Endothelial cell of umbilical vein (primary cell): ENCODE measurements at regions of chr7 and their contacts with region 1.

Region 1: DNA sequence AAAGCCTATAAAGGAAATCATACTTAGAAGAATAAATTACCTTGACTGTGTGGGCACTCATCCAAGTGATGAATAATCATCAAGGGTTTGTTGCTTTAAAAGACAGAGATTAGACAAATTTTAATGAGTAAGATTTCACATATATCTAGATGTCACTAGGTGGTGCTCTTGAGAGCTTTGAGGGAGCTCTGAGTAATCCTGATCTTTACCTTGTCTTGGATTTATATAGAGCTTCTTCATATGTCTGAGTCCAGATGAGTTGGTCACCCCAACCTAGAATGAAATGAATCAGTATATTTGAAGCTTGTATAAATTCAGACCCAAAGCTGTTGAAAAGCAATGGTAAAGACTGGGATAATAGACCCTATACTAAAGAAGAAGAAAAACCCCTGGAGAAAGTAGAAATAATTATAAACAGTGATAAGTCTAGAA is 3.7 kb downstream of the AGR2 start:
- DNase-seq: peak; percentile 57
- H3K4me3 ChIP-seq: no peak overlapping the region
- H3K27ac ChIP-seq: no peak overlapping the region
- H3K4me1 ChIP-seq: no peaks in the 10 kb centered on the region
- H3K27me3 ChIP-seq: peaks cover 2 to 4% of the 10 kb centered on the region in 2 experiments
- CTCF ChIP-seq: peak; percentile 28 to 29
- POLR2A ChIP-seq: no peak

Region 2: GRCh38 chr7:16657656-16658279 is 143.4 kb before region 1 on chr7:
- CTCF ChIA-PET with region 1: no interaction called
- POLR2A ChIA-PET with region 1: no interaction called
- dilution Hi-C with region 1: no loop called
- intact Hi-C with region 1: no loop called
- DNase-seq: no peak
- H3K4me3 ChIP-seq: no peak overlapping the region
- H3K27ac ChIP-seq: no peak overlapping the region
- H3K4me1 ChIP-seq: peaks cover 19% of the 10 kb centered on the region
- H3K27me3 ChIP-seq: no peaks in the 10 kb centered on the region
- CTCF ChIP-seq: no peak
- POLR2A ChIP-seq: no peak

Region 3: GRCh38 chr7:16695621-16696237 is 105.4 kb before region 1 on chr7:
- CTCF ChIA-PET with region 1: interaction called, 6 read pairs
- POLR2A ChIA-PET with region 1: no interaction called
- dilution Hi-C with region 1: no loop called
- intact Hi-C with region 1: loop called (anchors 5 kb)
- DNase-seq: peak; percentile 74
- H3K4me3 ChIP-seq: no peak overlapping the region
- H3K27ac ChIP-seq: no peak overlapping the region
- H3K4me1 ChIP-seq: peaks cover 7% of the 10 kb centered on the region
- H3K27me3 ChIP-seq: no peaks in the 10 kb centered on the region
- CTCF ChIP-seq: peak; percentile 44 to 54
- POLR2A ChIP-seq: no peak

Region 4: DNA sequence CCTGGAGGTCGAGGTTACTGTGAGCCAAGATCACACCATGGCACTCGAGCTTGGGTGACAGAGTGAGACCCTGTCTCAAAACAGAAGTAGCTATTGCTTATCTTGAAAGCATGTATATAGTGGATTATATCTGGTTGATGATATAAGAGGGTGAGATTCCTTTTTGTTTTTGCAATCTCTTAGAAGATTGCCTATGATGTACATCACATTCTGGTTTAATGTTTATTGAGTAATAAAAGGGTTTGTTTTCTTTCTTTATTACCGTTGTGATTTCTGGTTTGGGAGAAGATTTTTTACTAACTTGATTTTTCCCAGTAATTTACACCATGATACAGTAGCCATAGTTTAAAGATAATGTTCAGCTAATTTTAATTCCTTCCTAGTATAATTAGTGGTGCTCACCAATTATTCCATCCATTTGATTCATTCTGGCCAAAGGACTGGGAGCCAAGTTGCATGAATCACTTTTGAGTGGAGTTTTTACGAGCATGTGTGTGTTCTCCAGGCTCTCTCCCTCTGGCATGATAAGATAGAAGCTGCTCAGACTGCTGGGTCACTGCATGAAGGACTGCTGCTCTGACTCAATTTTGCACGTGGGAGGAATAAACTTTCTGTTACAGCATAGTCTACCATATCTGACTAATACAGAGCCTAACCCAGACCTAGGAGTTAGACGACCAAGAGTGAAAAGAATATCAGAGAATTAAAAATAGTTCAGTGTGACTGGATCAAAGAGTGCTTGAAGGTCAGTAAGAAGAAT is 61.1 kb before region 1 on chr7:
- CTCF ChIA-PET with region 1: interaction called, 11 read pairs
- POLR2A ChIA-PET with region 1: no interaction called
- dilution Hi-C with region 1: no loop called
- intact Hi-C with region 1: no loop called
- DNase-seq: peak; percentile 88
- H3K4me3 ChIP-seq: no peak overlapping the region
- H3K27ac ChIP-seq: peak overlapping the region; percentile 40
- H3K4me1 ChIP-seq: peaks cover 36% of the 10 kb centered on the region
- H3K27me3 ChIP-seq: no peaks in the 10 kb centered on the region
- CTCF ChIP-seq: no peak
- POLR2A ChIP-seq: no peak

Region 5: GRCh38 chr7:16780596-16780995 is 20.5 kb before region 1 on chr7:
- CTCF ChIA-PET with region 1: interaction called, 30 read pairs
- POLR2A ChIA-PET with region 1: no interaction called
- dilution Hi-C with region 1: no loop called
- intact Hi-C with region 1: no loop called
- DNase-seq: no peak
- H3K4me3 ChIP-seq: no peak overlapping the region
- H3K27ac ChIP-seq: no peak overlapping the region
- H3K4me1 ChIP-seq: no peaks in the 10 kb centered on the region
- H3K27me3 ChIP-seq: no peaks in the 10 kb centered on the region
- CTCF ChIP-seq: no peak
- POLR2A ChIP-seq: no peak

Region 6: DNA sequence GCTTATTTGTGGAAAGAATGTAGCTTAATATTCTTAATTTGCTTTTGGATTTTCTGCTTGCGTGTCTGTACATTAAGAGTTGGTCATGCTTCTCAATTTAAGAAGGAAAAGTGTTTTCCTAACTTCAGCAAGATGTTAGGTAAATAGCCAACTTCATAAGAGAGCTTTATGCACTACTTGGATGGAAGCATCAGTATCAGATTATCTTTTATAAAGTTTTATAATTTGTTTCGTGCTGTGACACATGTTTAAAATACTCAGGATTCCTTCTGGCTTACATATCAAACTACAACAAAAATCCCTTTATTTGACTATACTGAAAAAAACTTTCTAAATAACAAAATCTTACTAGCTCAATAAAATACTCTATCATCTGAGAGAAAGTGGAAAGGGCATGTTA is 38.5 kb after region 1 on chr7:
- CTCF ChIA-PET with region 1: interaction called, 12 read pairs
- POLR2A ChIA-PET with region 1: no interaction called
- dilution Hi-C with region 1: no loop called
- intact Hi-C with region 1: no loop called
- DNase-seq: no peak
- H3K4me3 ChIP-seq: no peak overlapping the region
- H3K27ac ChIP-seq: no peak overlapping the region
- H3K4me1 ChIP-seq: no peaks in the 10 kb centered on the region
- H3K27me3 ChIP-seq: peaks cover 0 to 1% of the 10 kb centered on the region in 2 experiments
- CTCF ChIP-seq: no peak
- POLR2A ChIP-seq: no peak